Sciatic nerve (tissue), 2 donors: ENCODE measurements at regions of chr6 and their contacts with region 1.

Region 1: DNA sequence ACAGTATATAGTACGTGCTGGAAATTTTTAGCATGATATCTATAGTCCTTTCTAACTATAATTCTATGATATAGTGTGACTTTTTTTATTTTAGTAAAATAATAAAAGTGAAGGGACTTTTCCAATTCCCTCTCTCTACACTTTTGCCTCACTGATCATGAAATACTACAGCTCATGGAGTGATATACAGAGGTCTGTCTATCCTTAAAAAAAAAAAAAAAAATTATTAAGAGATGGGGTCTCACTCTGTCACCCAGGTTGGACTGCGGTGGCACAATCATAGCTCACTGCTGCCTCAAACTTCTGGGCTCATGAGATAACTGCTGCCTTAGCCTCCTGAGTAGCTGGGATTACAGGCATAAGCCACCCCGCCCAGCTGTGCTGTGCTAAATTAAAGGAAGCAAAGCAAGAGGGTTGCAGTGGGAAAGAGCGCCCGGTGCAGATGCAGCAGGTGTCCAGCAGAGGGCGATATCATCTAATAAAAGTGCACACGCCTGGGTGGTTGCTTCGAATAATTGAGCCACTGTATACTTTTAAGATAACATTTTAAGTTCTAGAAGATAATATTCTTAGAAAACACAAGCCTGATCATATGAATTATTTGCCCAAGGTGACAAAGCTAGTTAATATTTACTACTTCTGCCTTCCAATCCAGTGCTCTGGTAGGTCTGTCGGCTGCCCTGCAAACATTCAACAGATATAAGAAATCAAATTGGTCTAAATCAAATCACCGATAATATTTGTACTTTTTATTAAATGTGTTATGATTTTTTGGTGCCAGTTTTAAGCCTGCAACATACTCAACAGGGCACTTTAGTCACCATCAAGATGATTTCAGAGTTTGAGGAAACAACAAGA is 94.9 kb upstream of the NT5E start:
- DNase-seq: peak; percentile 89
- ATAC-seq: peak; percentile 93

Region 2: GRCh38 chr6:85482905-85483700 is 128.1 kb after region 1 on chr6:
- intact Hi-C with region 1: loop called (anchors 5 kb)
- DNase-seq: peak; percentile 90
- ATAC-seq: peak; percentile 96